ENCODE measurements at regions of chr2 and their contacts with region 1.

Region 1: GRCh38 chr2:74587664-74588277 is 33.3 kb downstream of the DOK1 start:
- H3K4me3 ChIP-seq: no peak overlapping the region
- H3K27ac ChIP-seq: no peak overlapping the region
- H3K4me1 ChIP-seq: no peaks in the 10 kb centered on the region
- CTCF ChIP-seq: peak; percentile 63; the same call in 1 of the 2 replicates

Region 2: DNA sequence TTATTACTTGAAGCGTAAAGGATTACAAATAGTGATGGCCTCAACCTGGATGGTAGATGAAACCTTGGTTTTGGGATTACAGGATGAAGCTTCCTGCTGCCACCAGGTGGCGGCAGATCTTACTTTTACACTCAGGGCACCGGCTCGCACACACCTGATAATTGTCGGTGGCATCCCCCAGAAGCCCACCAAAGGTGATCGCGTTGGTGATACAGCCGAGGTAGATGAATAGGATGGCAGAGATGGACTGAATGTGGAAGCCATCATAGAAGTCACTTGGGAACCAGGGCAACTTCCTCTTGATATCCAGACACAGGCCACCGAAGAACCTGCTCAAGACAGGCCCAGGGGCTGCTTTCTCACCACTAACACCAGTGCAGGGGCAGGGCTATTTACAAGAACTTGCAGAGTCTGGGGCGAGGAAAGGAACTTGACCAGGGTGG is 337.6 kb before region 1 on chr2:
- CTCF ChIA-PET with region 1: interaction called, 10 read pairs
- POLR2A ChIA-PET with region 1: no interaction called
- H3K4me3 ChIP-seq: no peak overlapping the region
- H3K27ac ChIP-seq: no peak overlapping the region
- H3K4me1 ChIP-seq: no peaks in the 10 kb centered on the region
- CTCF ChIP-seq: no peak

Region 3: GRCh38 chr2:74491648-74492544 is 95.9 kb before region 1 on chr2:
- CTCF ChIA-PET with region 1: interaction called, 16 read pairs
- POLR2A ChIA-PET with region 1: no interaction called
- H3K4me3 ChIP-seq: no peak overlapping the region
- H3K27ac ChIP-seq: no peak overlapping the region
- H3K4me1 ChIP-seq: no peaks in the 10 kb centered on the region
- CTCF ChIP-seq: no peak

Region 4: GRCh38 chr2:74553892-74554645 is 33.7 kb before region 1 on chr2 and contains the start of gene LOXL3:
- CTCF ChIA-PET with region 1: interaction called, 13 read pairs
- POLR2A ChIA-PET with region 1: interaction called, 7 read pairs
- H3K4me3 ChIP-seq: peak within 1 kb of the TSS; percentile 56
- H3K27ac ChIP-seq: peak within 1 kb of the TSS; percentile 49; the same call in 1 of the 2 replicates
- H3K4me1 ChIP-seq: no peaks in the 10 kb centered on the region; the same call in 1 of the 2 replicates
- CTCF ChIP-seq: no peak

Region 5: GRCh38 chr2:74573747-74574562 is 13.8 kb before region 1 on chr2:
- CTCF ChIA-PET with region 1: interaction called, 51 read pairs
- POLR2A ChIA-PET with region 1: no interaction called
- H3K4me3 ChIP-seq: no peak overlapping the region
- H3K27ac ChIP-seq: no peak overlapping the region
- H3K4me1 ChIP-seq: no peaks in the 10 kb centered on the region
- CTCF ChIP-seq: no peak

Measured in HEK293 (cell line).